H1 (cell line): ENCODE measurements at regions of chr16 and their contacts with region 1.

Region 1: DNA sequence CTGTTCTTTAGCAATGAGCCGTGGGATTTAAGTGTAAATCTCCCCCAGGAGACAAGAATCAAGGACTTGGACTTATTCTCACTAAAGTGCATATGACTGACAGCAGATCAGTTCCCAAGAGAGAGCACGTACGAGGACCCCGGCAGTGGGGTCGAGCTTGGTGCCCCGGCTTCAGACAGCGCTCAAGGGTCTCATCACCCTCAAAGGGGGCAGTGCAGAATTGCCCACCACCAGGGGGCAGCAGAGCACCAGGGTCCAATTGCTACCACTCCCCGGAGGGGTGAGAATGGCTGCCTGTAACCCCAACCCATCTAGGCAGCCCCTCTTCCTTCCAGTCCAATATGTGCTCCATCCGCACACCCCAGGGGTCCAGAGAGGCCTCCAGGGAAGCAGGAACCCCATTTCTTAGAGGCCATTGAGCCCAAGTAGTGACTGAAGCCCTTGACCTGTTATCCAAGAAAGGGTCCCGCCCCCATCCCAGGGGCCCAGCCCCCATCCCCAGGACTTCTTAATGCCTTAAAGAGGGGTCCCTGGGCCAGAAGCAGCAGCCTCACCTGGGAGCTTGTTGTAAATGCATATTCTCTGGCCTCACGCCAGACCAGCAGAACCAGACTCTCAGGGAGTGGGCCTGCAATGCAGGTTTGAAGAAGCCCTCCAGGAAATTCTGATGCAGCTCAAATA is 86.1 kb downstream of the ZDHHC7 start:
- DNase-seq: peak; percentile 29 to 95
- H3K4me3 ChIP-seq: no peak overlapping the region
- H3K27ac ChIP-seq: no peak overlapping the region
- H3K4me1 ChIP-seq: peaks cover 0 to 2% (median 0%) of the 10 kb centered on the region in 4 experiments; a peak in 1 of 7 replicates
- H3K27me3 ChIP-seq: no peaks in the 10 kb centered on the region
- CTCF ChIP-seq: peak; percentile 91 to 92 (median 92)
- EP300 ChIP-seq: no peak
- POLR2A ChIP-seq: no peak
- RAD21 ChIP-seq: peak; percentile 88 to 89

Region 2: GRCh38 chr16:84810518-84811273 is 114.5 kb before region 1 on chr16:
- CTCF ChIA-PET with region 1: interaction called, 17 read pairs
- POLR2A ChIA-PET with region 1: no interaction called
- DNase-seq: no peak
- H3K4me3 ChIP-seq: no peak overlapping the region
- H3K27ac ChIP-seq: no peak overlapping the region
- H3K4me1 ChIP-seq: no peaks in the 10 kb centered on the region
- H3K27me3 ChIP-seq: peaks cover 0 to 4% (median 0%) of the 10 kb centered on the region in 4 experiments; a peak in 2 of 7 replicates
- CTCF ChIP-seq: no peak
- EP300 ChIP-seq: no peak
- POLR2A ChIP-seq: no peak
- RAD21 ChIP-seq: no peak

Region 3: GRCh38 chr16:84914273-84914672 is 11.0 kb before region 1 on chr16:
- CTCF ChIA-PET with region 1: interaction called, 20 read pairs
- POLR2A ChIA-PET with region 1: no interaction called
- DNase-seq: no peak
- H3K4me3 ChIP-seq: no peak overlapping the region
- H3K27ac ChIP-seq: no peak overlapping the region
- H3K4me1 ChIP-seq: no peaks in the 10 kb centered on the region; a peak in 1 of 7 replicates
- H3K27me3 ChIP-seq: no peaks in the 10 kb centered on the region
- CTCF ChIP-seq: no peak
- EP300 ChIP-seq: no peak
- POLR2A ChIP-seq: no peak
- RAD21 ChIP-seq: no peak

Region 4: DNA sequence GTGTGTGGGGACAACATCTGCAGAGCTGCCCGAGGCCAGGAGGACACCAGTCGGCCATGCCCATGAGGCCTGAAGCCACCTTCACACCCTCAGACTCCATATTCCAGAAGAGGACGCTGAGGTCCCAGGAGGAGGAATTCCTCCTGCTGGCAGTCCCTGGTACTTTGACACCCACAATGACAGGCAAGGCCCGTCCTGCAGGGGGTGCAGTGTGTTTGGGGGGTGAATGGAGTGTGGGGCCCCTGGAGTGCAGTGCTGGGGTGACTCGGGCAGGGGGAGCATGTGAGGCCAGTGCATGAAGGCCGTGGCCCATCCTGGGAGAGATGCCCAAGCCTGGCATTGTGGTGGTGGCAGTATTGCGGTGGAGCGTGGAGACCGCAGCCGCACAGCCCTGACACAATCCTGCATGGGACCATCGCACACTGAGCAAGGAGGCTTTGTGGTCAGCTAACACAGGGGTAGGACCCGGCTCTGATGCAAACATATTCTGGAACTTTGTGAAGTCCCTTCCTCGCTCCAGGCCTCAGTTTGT is 33.9 kb after region 1 on chr16:
- CTCF ChIA-PET with region 1: interaction called, 123 read pairs
- POLR2A ChIA-PET with region 1: interaction called, 4 read pairs
- DNase-seq: no peak
- H3K4me3 ChIP-seq: no peak overlapping the region
- H3K27ac ChIP-seq: no peak overlapping the region
- H3K4me1 ChIP-seq: 0 out of 7 replicates have a peak, but pooled peaks cover 0 to 2% (median 0%) of the 10 kb centered on the region in 4 experiments
- H3K27me3 ChIP-seq: no peaks in the 10 kb centered on the region
- CTCF ChIP-seq: peak; percentile 54 to 95 (median 65)
- EP300 ChIP-seq: no peak
- POLR2A ChIP-seq: no peak
- RAD21 ChIP-seq: peak in 1 of 2 experiments; percentile 28; a peak in 1 of 4 replicates

Region 5: DNA sequence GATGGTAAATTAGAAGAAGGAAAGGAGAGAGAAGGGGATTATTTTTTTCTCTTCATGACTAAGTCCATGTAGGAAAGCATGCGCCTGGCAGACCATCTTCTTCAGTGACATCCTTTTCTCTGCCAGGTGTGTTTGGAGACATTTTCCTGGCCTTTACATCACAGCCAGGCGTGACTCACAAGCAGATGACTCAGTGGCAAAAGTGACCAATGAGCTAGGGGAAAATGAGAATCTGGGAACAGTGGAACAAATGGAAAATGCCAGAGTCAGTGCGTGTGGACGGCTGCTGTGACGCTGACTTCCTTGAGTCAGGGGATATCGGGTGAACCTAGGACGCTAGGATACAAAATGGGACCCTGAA is 111.8 kb after region 1 on chr16:
- CTCF ChIA-PET with region 1: no interaction called
- POLR2A ChIA-PET with region 1: no interaction called
- DNase-seq: no peak
- H3K4me3 ChIP-seq: no peak overlapping the region
- H3K27ac ChIP-seq: no peak overlapping the region
- H3K4me1 ChIP-seq: peaks cover 0 to 2% (median 0%) of the 10 kb centered on the region in 4 experiments; a peak in 2 of 7 replicates
- H3K27me3 ChIP-seq: no peaks in the 10 kb centered on the region; a peak in 1 of 7 replicates
- CTCF ChIP-seq: no peak
- EP300 ChIP-seq: no peak
- POLR2A ChIP-seq: no peak
- RAD21 ChIP-seq: no peak